ENCODE measurements at regions of chr13 and their contacts with region 1.

Region 1: DNA sequence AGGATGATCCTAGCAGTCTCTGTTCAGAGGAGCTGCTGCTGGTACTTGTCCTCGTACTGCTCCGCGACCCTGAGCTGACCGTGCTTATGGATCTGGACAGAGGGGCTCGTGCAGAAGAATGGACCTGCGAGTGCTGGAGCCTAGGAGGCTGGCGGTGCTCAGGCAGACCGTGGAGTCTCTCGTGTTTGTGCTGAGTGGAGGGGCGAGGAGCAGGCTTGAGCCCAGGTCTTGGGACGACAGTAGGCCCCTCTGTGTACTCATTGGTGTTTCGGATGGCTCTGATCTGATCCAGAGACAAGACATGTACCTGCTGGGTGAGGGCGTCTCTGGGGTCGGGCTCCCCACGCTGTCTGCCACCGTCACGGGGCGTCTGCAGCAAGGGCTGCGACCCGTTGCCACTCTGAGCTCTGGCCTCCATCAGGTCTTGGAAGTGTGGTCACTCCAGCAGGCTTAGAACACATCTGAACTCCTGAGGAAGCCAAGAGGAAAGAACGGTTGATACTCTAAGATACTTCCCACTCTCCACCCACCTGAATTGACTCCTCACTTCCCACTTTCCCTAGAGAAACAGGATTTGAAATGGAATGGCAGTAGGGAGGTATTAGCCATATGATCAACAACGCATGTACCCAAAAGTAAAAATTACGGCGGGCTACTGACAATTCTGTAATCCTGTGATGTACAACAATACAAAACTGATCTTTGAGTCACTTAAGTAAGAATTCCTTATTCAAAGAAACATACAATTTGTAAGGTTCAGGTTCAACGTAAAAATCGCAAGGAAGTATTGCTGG is 3.4 kb downstream of the SPRY2 start:
- DNase-seq: peak; percentile 23
- H3K4me3 Mint-ChIP-seq: no peak overlapping the region
- H3K27ac Mint-ChIP-seq: no peak overlapping the region
- H3K4me1 Mint-ChIP-seq: peaks cover 25% of the 10 kb centered on the region
- H3K27me3 Mint-ChIP-seq: no peaks in the 10 kb centered on the region
- CTCF ChIP-seq: no peak

Region 2: DNA sequence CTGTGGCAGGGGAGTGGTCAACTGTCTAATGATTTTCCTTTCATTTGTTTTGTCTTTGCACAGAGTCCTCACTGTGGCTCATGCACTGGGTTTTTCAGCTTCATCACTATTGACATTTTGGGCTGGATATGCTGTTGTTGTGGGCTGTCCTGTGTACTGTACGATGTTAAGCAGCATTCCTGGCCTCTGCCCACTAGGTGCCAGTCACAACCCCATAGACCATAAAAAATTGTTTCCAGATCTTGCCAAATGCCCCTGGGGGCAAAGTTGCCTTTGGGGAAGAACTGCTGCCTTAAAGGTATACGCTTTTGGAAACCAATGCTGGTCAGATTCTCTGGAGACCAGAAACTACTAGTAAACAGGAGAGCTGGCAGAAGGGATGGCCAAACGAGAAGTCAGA is 307.0 kb before region 1 on chr13:
- CTCF ChIA-PET with region 1: interaction called, 7 read pairs
- POLR2A ChIA-PET with region 1: interaction called, 3 read pairs
- intact Hi-C with region 1: loop called (anchors 1 kb)
- DNase-seq: peak; percentile 84
- H3K4me3 Mint-ChIP-seq: no peak overlapping the region
- H3K27ac Mint-ChIP-seq: no peak overlapping the region
- H3K4me1 Mint-ChIP-seq: peaks cover 5% of the 10 kb centered on the region
- H3K27me3 Mint-ChIP-seq: no peaks in the 10 kb centered on the region
- CTCF ChIP-seq: peak; percentile 63

Region 3: GRCh38 chr13:80055847-80056246 is 281.6 kb before region 1 on chr13:
- CTCF ChIA-PET with region 1: no interaction called
- POLR2A ChIA-PET with region 1: no interaction called
- intact Hi-C with region 1: no loop called
- DNase-seq: no peak
- H3K4me3 Mint-ChIP-seq: no peak overlapping the region
- H3K27ac Mint-ChIP-seq: no peak overlapping the region
- H3K4me1 Mint-ChIP-seq: no peaks in the 10 kb centered on the region
- H3K27me3 Mint-ChIP-seq: no peaks in the 10 kb centered on the region
- CTCF ChIP-seq: no peak

Region 4: GRCh38 chr13:80469853-80470381 is 132.4 kb after region 1 on chr13:
- CTCF ChIA-PET with region 1: interaction called, 11 read pairs
- POLR2A ChIA-PET with region 1: interaction called, 16 read pairs
- intact Hi-C with region 1: loop called (anchors 5 kb)
- DNase-seq: peak; percentile 92
- H3K4me3 Mint-ChIP-seq: peak overlapping the region; percentile 30
- H3K27ac Mint-ChIP-seq: peak overlapping the region; percentile 98
- H3K4me1 Mint-ChIP-seq: peaks cover 53% of the 10 kb centered on the region
- H3K27me3 Mint-ChIP-seq: no peaks in the 10 kb centered on the region
- CTCF ChIP-seq: no peak

Region 5: DNA sequence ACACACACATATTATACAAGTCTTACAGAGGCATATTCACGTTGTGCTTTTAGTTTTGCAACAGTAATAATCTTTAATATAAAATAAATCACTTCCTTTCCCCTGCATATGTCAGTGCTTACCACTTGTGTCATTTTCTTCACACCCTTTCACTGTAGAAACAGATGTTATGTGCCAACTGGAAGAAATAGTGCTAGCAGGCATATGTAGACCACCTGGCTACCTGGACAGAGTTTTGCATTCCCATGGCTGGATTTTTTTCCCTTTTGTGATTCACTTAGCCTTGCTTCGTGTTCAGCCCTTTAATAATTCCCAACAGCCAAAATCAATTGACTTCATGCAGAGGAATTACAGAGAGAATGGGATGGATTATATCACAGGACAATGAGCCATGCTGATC is 402.6 kb after region 1 on chr13:
- CTCF ChIA-PET with region 1: no interaction called
- POLR2A ChIA-PET with region 1: no interaction called
- intact Hi-C with region 1: no loop called
- DNase-seq: no peak
- H3K4me3 Mint-ChIP-seq: no peak overlapping the region
- H3K27ac Mint-ChIP-seq: no peak overlapping the region
- H3K4me1 Mint-ChIP-seq: no peaks in the 10 kb centered on the region
- H3K27me3 Mint-ChIP-seq: no peaks in the 10 kb centered on the region
- CTCF ChIP-seq: no peak

Measured in MCF 10A (cell line).